MCF 10A (cell line): ENCODE measurements at regions of chr2 and their contacts with region 1.

Region 1: DNA sequence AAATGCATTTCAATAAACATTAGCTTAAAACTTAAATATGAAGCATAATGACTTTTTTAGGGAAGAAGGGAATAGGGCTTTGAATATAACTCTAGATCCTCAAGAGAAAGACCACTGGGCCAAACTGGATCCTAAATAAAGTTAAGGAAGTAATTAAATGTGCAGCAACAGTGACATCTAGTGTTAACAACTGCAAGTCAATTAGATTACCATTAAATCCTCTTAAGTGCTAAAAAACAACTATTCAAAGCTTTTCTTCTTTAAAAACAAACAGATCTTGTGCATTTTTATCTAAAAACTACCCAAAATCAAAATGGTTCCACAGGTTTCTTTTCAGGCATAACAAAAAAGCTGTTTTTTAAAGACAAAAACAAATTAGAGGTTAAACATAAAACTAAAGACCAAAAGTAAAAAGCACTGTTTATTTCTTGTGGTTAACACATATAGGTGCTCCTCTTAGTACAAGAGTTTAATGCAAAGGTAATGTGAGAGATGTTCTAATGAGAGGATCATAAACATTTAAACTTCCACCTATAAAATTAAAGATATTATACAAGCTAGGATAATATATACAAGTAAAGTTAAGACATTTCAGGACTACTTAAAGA is 111.4 kb downstream of the THADA start:
- DNase-seq: peak; percentile 74
- H3K4me3 Mint-ChIP-seq: no peak overlapping the region
- H3K27ac Mint-ChIP-seq: peak overlapping the region; percentile 96
- H3K4me1 Mint-ChIP-seq: peaks cover 37% of the 10 kb centered on the region
- H3K27me3 Mint-ChIP-seq: no peaks in the 10 kb centered on the region
- CTCF ChIP-seq: peak; percentile 59

Region 2: GRCh38 chr2:42859006-42859552 is 625.3 kb before region 1 on chr2:
- CTCF ChIA-PET with region 1: interaction called, 7 read pairs
- POLR2A ChIA-PET with region 1: interaction called, 3 read pairs
- intact Hi-C with region 1: loop called (anchors 1 kb)
- DNase-seq: peak; percentile 82
- H3K4me3 Mint-ChIP-seq: no peak overlapping the region
- H3K27ac Mint-ChIP-seq: no peak overlapping the region
- H3K4me1 Mint-ChIP-seq: peaks cover 12% of the 10 kb centered on the region
- H3K27me3 Mint-ChIP-seq: no peaks in the 10 kb centered on the region
- CTCF ChIP-seq: peak; percentile 91

Region 3: DNA sequence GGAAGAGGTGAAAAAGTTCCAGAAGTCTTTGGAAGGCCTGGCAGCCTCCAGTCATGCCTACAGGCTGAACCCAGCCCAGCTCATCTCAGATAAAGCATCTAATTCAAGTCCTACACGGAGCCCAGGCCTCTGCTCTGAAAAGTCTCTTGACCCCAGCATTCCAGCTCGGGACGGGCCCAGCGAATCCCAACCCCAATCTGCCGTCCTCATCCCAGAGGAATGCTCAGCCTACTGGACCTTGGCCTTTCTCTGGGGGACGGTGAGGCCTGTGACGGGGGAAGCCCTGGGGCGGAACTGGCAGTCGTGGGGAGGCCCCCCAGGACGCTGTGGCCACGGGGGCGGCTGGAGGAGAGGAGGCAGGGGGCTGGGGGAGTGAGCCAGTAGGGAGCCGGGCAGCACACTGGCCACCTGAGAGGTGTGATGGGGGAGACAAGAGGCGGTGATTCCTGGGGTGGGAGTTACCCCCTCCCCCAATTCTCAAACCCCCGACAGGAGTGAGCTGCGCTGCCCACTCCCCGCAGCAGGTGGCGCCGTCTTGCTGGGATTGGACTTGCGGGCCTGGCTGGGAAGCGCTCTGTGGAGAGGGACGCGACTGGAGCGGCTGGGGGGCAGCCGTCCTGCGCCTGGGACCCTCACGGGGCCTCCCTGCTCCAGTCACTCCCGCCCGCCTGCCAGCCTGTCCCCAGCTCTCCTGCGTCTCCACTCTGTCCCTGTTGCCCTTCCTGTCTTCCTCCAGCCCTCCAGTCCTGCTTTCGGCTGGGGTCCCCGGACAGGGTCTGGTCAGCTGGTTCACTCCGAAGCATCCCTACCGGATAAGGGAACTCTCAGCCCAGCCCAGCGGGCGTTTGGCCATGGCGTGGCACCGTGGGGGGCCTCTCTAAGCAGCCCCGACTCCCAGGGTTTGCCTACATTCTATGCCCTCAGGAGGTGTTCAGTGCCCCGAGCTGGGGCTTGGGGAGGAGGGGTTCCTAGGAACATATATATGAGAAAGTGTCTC is 509.4 kb before region 1 on chr2:
- CTCF ChIA-PET with region 1: interaction called, 19 read pairs
- POLR2A ChIA-PET with region 1: interaction called, 11 read pairs
- intact Hi-C with region 1: loop called (anchors 10 kb)
- DNase-seq: peak; percentile 64
- H3K4me3 Mint-ChIP-seq: no peak overlapping the region
- H3K27ac Mint-ChIP-seq: peak overlapping the region; percentile 52
- H3K4me1 Mint-ChIP-seq: peaks cover 38% of the 10 kb centered on the region
- H3K27me3 Mint-ChIP-seq: no peaks in the 10 kb centered on the region
- CTCF ChIP-seq: peak; percentile 95

Region 4: GRCh38 chr2:43455731-43456642 is 28.4 kb before region 1 on chr2:
- CTCF ChIA-PET with region 1: interaction called, 7 read pairs
- POLR2A ChIA-PET with region 1: interaction called, 10 read pairs
- intact Hi-C with region 1: loop called (anchors 2 kb)
- DNase-seq: peak; percentile 48
- H3K4me3 Mint-ChIP-seq: no peak overlapping the region
- H3K27ac Mint-ChIP-seq: peak overlapping the region; percentile 78
- H3K4me1 Mint-ChIP-seq: peaks cover 47% of the 10 kb centered on the region
- H3K27me3 Mint-ChIP-seq: no peaks in the 10 kb centered on the region
- CTCF ChIP-seq: no peak

Region 5: DNA sequence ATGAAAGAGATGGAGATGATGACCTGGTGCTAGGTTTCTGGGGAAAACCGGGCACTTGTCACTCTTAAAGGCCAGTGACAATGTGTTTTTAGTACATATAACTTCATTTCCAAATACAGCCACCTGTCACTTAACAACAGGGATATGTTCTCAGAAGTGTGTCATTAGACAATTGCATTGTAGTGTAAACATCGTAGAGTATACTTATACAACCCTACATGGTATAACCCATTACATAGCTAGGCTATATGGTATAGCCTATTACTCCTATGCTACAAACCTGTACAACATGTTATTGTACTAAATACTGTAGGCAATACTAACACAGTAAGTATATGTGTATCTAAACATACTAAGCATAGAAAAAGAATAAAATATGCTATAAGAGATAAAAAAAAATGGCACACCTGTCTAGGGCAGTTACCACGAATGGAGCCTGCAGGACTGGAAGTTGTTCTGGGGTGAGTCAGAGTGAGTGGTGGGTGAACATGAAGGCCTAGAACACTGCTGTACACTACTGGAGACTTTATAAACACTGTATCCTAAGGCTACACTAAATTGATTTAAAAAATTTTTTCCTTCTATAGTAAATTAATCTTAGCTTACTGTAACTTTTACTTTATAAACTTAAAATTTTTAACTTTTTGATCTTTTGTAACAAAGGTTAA is 11.8 kb before region 1 on chr2:
- CTCF ChIA-PET with region 1: interaction called, 15 read pairs
- POLR2A ChIA-PET with region 1: interaction called, 37 read pairs
- intact Hi-C with region 1: no loop called
- DNase-seq: no peak
- H3K4me3 Mint-ChIP-seq: no peak overlapping the region
- H3K27ac Mint-ChIP-seq: no peak overlapping the region
- H3K4me1 Mint-ChIP-seq: peaks cover 27% of the 10 kb centered on the region
- H3K27me3 Mint-ChIP-seq: no peaks in the 10 kb centered on the region
- CTCF ChIP-seq: no peak

Region 6: GRCh38 chr2:43685357-43685756 is 200.9 kb after region 1 on chr2:
- CTCF ChIA-PET with region 1: no interaction called
- POLR2A ChIA-PET with region 1: no interaction called
- intact Hi-C with region 1: no loop called
- DNase-seq: no peak
- H3K4me3 Mint-ChIP-seq: no peak overlapping the region
- H3K27ac Mint-ChIP-seq: no peak overlapping the region
- H3K4me1 Mint-ChIP-seq: no peaks in the 10 kb centered on the region
- H3K27me3 Mint-ChIP-seq: no peaks in the 10 kb centered on the region
- CTCF ChIP-seq: no peak